PC-3 (cell line): ENCODE measurements at regions of chr4 and their contacts with region 1.

Region 1: DNA sequence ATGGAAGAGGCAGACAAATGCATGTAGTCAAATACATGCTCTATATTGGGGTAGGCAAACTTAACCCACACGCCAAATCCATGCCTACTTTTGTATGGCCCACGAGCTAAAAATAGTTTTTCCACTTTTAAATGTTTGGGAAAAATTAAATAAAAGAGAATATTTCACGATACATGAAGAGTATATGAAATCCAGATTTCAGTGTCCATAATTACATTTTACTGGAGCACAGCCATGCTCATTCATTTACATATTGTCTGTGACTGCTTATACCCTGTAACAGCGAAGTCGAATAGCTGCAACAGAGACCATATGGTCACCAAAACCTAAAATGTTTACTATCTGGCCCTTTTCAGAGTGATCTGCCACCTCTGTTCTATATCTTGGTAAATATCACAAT is 257.4 kb upstream of the NOCT start:
- DNase-seq: no peak
- ATAC-seq: no peak
- H3K4me3 ChIP-seq: no peak overlapping the region
- H3K27ac ChIP-seq: no peak overlapping the region
- H3K4me1 ChIP-seq: no peaks in the 10 kb centered on the region
- H3K27me3 ChIP-seq: no peaks in the 10 kb centered on the region
- CTCF ChIP-seq: no peak

Region 2: GRCh38 chr4:138686106-138686835 is 71.9 kb before region 1 on chr4:
- CTCF ChIA-PET with region 1: no interaction called
- POLR2A ChIA-PET with region 1: no interaction called
- intact Hi-C with region 1: no loop called
- DNase-seq: no peak
- ATAC-seq: no peak
- H3K4me3 ChIP-seq: no peak overlapping the region
- H3K27ac ChIP-seq: no peak overlapping the region
- H3K4me1 ChIP-seq: peaks cover 4% of the 10 kb centered on the region; the same call in 1 of the 2 replicates
- H3K27me3 ChIP-seq: no peaks in the 10 kb centered on the region
- CTCF ChIP-seq: no peak

Region 3: GRCh38 chr4:139078926-139079325 is 320.7 kb after region 1 on chr4:
- CTCF ChIA-PET with region 1: interaction called, 11 read pairs
- POLR2A ChIA-PET with region 1: no interaction called
- intact Hi-C with region 1: no loop called
- DNase-seq: no peak
- ATAC-seq: no peak
- H3K4me3 ChIP-seq: no peak overlapping the region
- H3K27ac ChIP-seq: no peak overlapping the region
- H3K4me1 ChIP-seq: peaks cover 19% of the 10 kb centered on the region; the same call in 1 of the 2 replicates
- H3K27me3 ChIP-seq: no peaks in the 10 kb centered on the region
- CTCF ChIP-seq: no peak